Heart right ventricle (tissue), 16 donors: ENCODE measurements at regions of chr3 and their contacts with region 1.

Region 1: DNA sequence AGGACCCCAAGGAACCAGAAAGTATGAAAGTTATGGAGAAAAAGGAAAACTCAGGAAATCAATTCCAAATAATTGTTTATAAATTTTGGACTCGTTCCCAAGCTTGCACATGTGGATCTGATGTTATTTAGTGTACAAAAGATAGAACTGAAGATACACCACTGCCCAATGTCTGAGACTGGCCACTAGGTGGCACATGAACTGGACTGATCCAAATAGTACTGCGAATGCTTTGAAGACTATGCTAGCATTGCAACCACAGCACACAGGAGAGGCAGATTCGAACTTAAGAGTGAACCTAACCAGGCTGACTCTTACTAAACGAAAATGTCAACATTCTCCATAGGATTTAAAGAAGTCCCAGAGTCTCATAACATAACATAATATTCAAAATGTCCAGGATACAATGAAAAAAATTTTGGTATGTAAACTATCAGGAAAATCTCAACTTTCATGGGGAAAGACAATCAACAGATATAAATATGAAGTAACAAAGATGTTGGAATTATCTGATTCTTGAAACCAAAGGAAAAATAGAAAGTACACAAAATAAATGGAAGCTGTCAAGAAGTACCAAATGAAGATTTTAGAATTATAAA is 596.7 kb downstream of the FGF12 start:
- DNase-seq: peak in 1 of 2 donors; percentile 34
- ATAC-seq: peak in 7 of 8 donors; percentile 58 to 86 (median 74)
- H3K4me3 ChIP-seq: no peak overlapping the region
- H3K27ac ChIP-seq: no peak overlapping the region
- H3K4me1 ChIP-seq: no peaks in the 10 kb centered on the region
- H3K27me3 ChIP-seq: no peaks in the 10 kb centered on the region
- CTCF ChIP-seq: peak; percentile 64 to 87 (median 77)

Region 2: GRCh38 chr3:191412759-191413158 is 717.9 kb before region 1 on chr3:
- intact Hi-C with region 1: loop called in 1 of 10 experiments (anchors 10 kb)
- DNase-seq: no peak
- ATAC-seq: no peak
- H3K4me3 ChIP-seq: no peak overlapping the region
- H3K27ac ChIP-seq: no peak overlapping the region
- H3K4me1 ChIP-seq: peaks cover 0 to 8% (median 0%) of the 10 kb centered on the region in 9 donors
- H3K27me3 ChIP-seq: no peaks in the 10 kb centered on the region
- CTCF ChIP-seq: no peak

Region 3: GRCh38 chr3:192068464-192069254 is 62.0 kb before region 1 on chr3:
- intact Hi-C with region 1: no loop called
- DNase-seq: no peak
- ATAC-seq: no peak
- H3K4me3 ChIP-seq: no peak overlapping the region
- H3K27ac ChIP-seq: no peak overlapping the region
- H3K4me1 ChIP-seq: no peaks in the 10 kb centered on the region
- H3K27me3 ChIP-seq: no peaks in the 10 kb centered on the region
- CTCF ChIP-seq: no peak

Region 4: GRCh38 chr3:192423003-192423349 is 292.3 kb after region 1 on chr3:
- intact Hi-C with region 1: loop called in 5 of 10 experiments (anchors 5 to 10 kb)
- DNase-seq: no peak
- ATAC-seq: no peak
- H3K4me3 ChIP-seq: no peak overlapping the region
- H3K27ac ChIP-seq: no peak overlapping the region
- H3K4me1 ChIP-seq: peaks cover 0 to 4% (median 0%) of the 10 kb centered on the region in 9 donors
- H3K27me3 ChIP-seq: no peaks in the 10 kb centered on the region
- CTCF ChIP-seq: peak in 8 of 9 donors; percentile 11 to 63 (median 32)

Region 5: GRCh38 chr3:192467230-192468140 is 336.9 kb after region 1 on chr3:
- intact Hi-C with region 1: no loop called
- DNase-seq: peak; percentile 19 to 47
- ATAC-seq: peak; percentile 58 to 83 (median 78)
- H3K4me3 ChIP-seq: no peak overlapping the region
- H3K27ac ChIP-seq: peak overlapping the region in 1 of 10 donors; percentile 26
- H3K4me1 ChIP-seq: peaks cover 0 to 9% (median 5%) of the 10 kb centered on the region in 9 donors
- H3K27me3 ChIP-seq: peaks cover 0 to 11% (median 0%) of the 10 kb centered on the region in 7 donors
- CTCF ChIP-seq: peak; percentile 81 to 96 (median 91)